ENCODE measurements at regions of chr11 and their contacts with region 1.

Region 1: DNA sequence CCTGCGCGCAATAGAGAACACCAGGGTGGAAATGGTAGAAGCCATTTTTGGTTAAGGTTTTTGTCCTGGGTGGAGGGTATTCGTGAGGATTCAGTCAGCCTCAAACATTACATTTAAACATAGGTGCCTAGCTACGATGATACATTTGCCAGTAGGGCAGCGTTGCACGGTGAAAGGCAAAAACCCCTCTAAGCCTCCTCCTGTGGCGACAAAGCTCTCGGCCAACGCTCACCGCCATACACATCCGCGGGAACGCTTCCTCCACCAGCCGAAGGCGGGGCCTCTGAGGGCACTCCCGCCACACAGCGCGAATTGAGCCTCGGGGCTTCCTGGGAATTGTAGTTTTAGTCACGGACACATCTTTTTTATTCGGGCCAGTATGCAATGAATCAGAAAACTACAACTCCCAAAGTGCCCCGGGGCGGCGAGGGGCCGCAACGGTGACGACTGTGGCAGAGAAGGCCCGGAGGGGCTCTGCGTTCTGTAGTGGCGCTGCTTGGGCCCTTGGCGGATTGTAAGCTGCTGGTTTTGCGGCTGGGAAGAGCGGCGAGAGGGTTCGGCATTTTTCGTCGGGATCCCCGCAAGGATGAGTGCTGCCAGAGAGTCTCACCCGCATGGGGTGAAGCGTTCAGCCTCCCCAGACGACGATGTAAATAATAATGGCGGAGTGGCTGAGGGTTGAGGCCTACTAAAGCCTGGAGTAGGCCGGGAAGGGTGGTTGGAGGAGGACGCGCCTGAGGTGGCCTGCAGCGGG is at the start of gene C11orf58:
- DNase-seq: peak; percentile 98
- H3K4me3 ChIP-seq: peak within 1 kb of the TSS; percentile 81
- H3K27ac ChIP-seq: peak within 1 kb of the TSS; percentile 96
- H3K4me1 ChIP-seq: peaks cover 5% of the 10 kb centered on the region
- H3K27me3 ChIP-seq: no peaks in the 10 kb centered on the region
- CTCF ChIP-seq: no peak
- total RNA-seq, gene C11orf58: 153 and 171 TPM in 2 replicates

Region 2: DNA sequence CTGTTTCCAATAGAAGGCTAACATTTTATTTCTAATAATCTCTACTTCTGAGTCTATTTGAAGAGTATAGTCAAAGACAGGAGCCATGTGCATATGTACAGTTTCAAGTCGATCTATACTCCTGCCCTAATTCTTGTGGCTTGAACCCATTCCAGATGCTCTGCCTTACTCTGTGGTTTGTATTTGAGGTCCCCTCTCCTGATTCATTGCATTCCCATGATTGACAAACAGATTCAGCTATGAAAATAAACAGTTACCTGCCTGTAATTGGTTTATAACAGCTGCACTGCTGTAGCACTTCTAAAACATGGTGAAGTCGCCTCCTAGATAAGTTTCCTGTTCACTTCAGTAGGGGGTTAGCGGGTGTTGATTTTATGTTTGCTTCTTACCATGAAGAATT is 520.7 kb before region 1 on chr11:
- CTCF ChIA-PET with region 1: no interaction called
- POLR2A ChIA-PET with region 1: no interaction called
- intact Hi-C with region 1: loop called (anchors 10 kb)
- DNase-seq: no peak
- H3K4me3 ChIP-seq: no peak overlapping the region
- H3K27ac ChIP-seq: no peak overlapping the region
- H3K4me1 ChIP-seq: peaks cover 10% of the 10 kb centered on the region
- H3K27me3 ChIP-seq: no peaks in the 10 kb centered on the region
- CTCF ChIP-seq: no peak

Measured in A673 (cell line).